ENCODE measurements at regions of chr10 and their contacts with region 1.

Region 1: DNA sequence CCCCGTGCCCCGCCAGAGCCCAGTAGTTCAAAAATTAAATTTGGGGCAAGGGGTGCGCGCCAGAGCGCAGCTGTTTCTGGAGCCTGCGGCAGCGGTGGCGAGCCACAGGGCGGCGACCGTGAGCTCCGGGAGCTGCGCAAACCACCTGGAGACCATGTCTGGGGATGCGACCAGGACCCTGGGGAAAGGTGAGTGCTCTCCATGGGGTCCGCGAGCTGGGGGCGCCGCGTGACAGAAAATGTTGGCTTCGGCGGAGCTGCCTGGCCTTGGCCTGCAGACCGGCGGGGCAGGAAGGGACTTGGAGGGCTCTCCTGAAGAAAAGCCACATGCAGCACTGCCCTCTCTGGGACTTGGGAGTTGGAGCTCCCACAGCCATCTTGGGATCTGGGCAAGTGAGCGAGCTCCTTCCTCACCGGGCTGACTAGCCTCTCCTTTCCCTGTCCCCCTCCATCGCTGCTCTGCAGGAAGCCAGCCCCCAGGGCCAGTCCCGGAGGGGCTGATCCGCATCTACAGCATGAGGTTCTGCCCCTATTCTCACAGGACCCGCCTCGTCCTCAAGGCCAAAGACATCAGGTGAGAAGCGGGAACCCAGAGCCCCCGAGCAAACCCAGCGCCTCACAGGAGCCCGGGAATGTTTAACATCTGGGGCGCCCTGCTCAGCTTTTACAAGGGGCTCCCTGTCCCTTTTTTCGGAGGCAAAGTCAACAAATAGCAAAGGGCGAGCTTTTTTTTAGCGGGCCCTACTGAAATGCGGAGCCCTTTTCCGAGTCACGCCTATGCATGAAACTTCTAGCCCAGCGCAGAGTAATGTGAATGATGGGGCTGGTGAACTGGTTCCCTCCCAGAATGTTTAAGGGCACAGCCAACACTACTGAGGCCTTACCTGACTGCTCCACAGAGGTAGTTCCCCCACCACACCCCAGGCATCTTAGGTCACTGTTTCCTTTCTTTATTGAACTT is 6.1 kb downstream of the GSTO2 start:
- DNase-seq: no peak
- H3K4me3 ChIP-seq: peak overlapping the region; percentile 41
- CTCF ChIP-seq: peak; percentile 92

Region 2: DNA sequence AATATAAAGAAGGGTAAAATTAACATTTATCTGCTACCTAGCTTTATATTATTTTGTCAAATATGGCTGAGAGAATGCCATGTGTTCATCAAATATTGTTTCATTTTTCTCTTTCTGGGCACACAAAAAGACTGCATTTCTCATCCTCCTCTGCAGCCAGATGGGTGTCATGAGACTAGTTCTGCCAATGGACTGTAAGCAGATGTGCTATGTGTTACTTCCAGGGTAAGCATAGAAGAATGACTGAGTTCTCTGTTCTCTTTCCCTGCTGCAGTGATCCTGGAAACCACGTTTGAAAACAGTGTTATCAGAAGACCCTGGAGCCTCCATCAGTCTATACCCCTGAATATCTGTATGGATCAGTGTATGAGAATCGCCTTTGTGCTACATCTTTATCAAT is 332.2 kb before region 1 on chr10:
- CTCF ChIA-PET with region 1: no interaction called
- POLR2A ChIA-PET with region 1: no interaction called
- DNase-seq: no peak
- H3K4me3 ChIP-seq: no peak overlapping the region
- CTCF ChIP-seq: no peak

Region 3: GRCh38 chr10:104045151-104046089 is 229.6 kb before region 1 on chr10:
- CTCF ChIA-PET with region 1: interaction called, 12 read pairs
- POLR2A ChIA-PET with region 1: no interaction called
- DNase-seq: no peak
- H3K4me3 ChIP-seq: no peak overlapping the region
- CTCF ChIP-seq: peak; percentile 79

Region 4: GRCh38 chr10:104260775-104261115 is 14.3 kb before region 1 on chr10:
- CTCF ChIA-PET with region 1: interaction called, 29 read pairs
- POLR2A ChIA-PET with region 1: interaction called, 14 read pairs
- DNase-seq: no peak
- H3K4me3 ChIP-seq: no peak overlapping the region
- CTCF ChIP-seq: no peak

Region 5: DNA sequence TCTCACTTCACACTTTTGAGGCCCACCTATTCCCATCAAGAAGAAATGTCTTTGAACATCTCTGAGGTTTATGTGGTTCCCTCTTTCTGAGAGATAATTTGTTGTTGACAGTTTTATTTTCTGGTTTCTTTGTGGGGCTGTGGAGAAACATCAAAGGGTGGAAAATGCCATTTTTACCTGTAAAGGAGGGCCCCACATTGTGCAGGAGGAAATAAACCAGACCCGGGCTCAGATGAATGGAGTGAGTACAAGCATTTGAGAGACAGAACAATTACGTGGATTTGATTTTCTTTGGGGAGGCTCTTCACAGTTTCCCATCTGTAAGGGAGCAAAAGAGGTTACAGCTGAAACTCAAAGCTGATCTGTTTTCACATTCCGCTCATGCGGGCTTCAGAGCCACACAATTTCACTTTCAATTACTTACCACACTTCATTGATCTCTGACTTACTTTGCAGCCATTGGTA is 33.4 kb after region 1 on chr10:
- CTCF ChIA-PET with region 1: interaction called, 20 read pairs
- POLR2A ChIA-PET with region 1: no interaction called
- DNase-seq: no peak
- H3K4me3 ChIP-seq: no peak overlapping the region
- CTCF ChIP-seq: no peak

Region 6: DNA sequence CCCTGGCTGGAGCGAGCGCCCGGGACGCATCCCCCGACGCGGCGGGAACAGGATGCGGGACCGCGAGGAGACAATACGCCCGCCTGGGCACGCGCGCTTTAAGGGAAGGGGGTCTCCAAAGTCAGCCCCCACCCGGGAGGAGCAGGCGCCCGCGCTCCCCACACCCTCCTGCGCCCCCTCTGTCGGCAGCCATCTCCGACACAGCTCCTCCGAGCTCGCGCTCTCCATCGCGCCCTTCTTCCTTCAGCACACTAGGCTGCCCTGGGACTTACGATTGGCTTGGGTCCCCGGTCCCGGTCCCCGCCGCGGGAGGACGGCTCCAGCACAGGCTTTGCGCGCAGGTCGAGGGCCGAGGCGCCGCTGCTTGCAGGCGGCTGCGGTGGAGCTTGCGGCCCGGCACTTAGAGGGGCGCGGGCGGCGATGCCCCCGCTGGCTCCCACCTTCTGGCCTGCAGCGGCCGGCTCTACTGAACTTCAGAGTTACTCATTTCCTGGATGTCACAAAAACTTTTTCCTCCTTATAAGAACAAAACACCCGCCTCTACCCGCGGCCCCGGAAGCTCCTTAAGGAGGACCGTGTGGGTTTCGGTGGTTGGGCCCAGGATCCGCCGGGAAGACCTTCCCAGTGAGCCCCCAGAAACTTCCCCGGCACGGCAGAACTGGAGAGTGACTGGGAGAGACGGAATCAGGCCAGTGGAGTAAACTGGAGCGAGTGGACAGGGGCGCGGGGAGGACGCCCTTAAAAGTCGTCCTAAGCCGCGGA is 63.1 kb after region 1 on chr10 and contains the start of gene ITPRIP:
- CTCF ChIA-PET with region 1: interaction called, 28 read pairs
- POLR2A ChIA-PET with region 1: interaction called, 9 read pairs
- DNase-seq: no peak
- H3K4me3 ChIP-seq: peak within 1 kb of the TSS; percentile 85
- CTCF ChIP-seq: peak; percentile 28